Motor neuron (in vitro differentiated cells): ENCODE measurements at regions of chr6 and their contacts with region 1.

Region 1: GRCh38 chr6:150813319-150813992 is 52.0 kb upstream of the MTHFD1L start:
- ATAC-seq: peak in 7 of 8 experiments; percentile 17 to 35 (median 24)
- H3K4me3 ChIP-seq: no peak overlapping the region
- H3K27ac ChIP-seq: no peak overlapping the region
- H3K4me1 ChIP-seq: no peaks in the 10 kb centered on the region

Region 2: GRCh38 chr6:149925974-149926777 is 887.3 kb before region 1 on chr6:
- in situ Hi-C with region 1: loop called in 1 of 9 experiments (anchors 25 kb)
- ATAC-seq: peak; percentile 69 to 89 (median 85)
- H3K4me3 ChIP-seq: peak overlapping the region in 4 of 5 donors; percentile 8 to 24 (median 21)
- H3K27ac ChIP-seq: no peak overlapping the region
- H3K4me1 ChIP-seq: peaks cover 3 to 5% of the 10 kb centered on the region in 2 donors

Region 3: DNA sequence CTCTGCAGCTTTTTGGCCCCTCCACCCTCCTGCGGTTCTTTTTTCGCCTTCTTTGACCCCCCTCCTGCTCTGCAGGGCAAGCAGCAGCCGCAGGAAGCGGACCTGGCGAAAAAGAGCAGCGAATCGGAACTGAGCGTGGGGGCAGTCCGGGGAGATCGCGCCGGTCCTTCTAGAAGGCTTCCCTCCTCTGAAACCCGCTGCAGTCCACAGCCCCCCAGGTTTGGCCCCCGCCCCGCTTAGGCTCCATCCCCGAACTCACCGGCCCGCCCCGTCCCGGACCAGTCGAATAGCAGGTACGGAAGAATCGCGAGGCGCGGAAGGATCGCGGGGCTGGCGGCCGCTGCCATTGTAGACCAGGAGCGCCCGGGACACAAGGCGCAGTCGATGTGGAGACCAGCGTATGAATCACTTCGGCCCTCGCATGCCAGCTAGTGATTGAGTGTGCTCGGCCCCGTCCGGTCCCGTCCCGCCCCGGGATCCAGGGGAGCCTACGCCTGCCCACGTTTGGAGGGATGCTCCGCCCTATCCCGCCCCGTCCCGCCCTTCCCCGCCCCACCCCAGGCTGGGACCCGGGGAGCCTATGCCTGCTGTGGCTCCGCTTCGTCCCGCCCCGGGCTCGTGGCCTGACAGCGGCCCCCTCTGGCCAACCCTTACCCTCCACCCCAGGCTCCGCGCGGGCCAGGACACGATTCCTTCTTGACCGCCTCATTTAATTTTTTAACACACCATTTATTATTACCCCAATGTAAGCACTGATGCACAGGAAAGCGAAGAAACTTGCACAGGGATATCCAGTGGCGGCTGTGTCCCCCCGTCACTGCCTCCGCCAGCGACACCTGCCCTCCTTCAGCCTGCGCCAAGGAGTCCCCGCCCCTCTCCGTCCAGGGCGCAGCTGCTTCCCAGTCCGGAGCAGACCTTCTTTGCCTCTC is 744.5 kb before region 1 on chr6 and contains the start of gene ULBP3:
- in situ Hi-C with region 1: loop called in 2 of 9 experiments (anchors 25 kb)
- ATAC-seq: peak; percentile 81 to 93 (median 88)
- H3K4me3 ChIP-seq: peak within 1 kb of the TSS; percentile 43 to 52 (median 50)
- H3K27ac ChIP-seq: peak within 1 kb of the TSS; percentile 48 to 77
- H3K4me1 ChIP-seq: peaks cover 10 to 14% of the 10 kb centered on the region in 2 donors
- total RNA-seq, gene ULBP3: 5.0 to 43.3 (median 13.1) TPM

Region 4: DNA sequence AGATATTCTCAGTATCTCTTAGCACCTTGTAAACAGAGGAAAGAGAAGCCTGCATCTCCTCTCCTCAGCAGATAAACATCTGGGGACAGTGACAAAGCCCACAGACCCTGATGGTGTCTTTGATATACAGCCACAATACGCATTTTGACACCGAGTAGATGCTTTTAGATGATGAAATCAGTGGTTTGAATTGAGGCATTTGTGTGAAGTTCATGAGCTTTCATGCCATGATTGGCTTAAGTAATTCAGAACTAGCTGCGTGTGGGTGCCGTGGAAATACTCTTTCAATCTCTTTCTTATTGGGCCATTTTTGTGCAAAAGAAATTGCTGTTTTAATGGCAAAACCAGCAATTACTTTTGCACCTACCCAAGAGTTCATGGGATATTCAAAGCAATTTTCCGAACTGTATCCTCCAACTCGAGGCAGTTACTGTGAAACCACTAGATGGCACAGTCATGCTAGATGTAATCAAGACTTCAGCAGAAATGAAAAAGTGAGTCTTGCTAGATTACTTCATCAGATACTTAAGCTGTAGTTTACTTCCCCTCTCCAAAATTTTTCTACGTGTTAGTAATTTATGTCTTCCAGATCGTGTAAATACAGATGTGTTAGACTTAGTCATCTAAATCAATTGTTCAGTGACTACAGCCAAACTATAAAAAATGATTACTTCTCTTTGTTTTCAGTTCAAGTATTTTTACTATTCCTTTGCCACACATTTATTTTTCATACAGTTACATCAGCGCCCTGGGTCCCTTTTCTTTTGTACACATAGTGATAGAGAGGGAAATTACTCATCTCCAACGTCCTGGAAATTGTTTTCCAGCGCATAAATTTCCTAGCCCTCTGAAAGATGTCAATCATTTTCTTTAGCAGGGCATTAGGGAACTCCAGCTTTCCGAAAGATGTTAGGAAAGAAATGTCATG is 395.3 kb before region 1 on chr6:
- in situ Hi-C with region 1: loop called (anchors 5 to 25 kb)
- ATAC-seq: peak; percentile 7 to 81 (median 72)
- H3K4me3 ChIP-seq: no peak overlapping the region
- H3K27ac ChIP-seq: peak overlapping the region in 1 of 2 donors; percentile 36
- H3K4me1 ChIP-seq: peaks cover 17 to 18% of the 10 kb centered on the region in 2 donors

Region 5: GRCh38 chr6:150600301-150601017 is 213.0 kb before region 1 on chr6:
- in situ Hi-C with region 1: loop called in 1 of 9 experiments (anchors 25 kb)
- ATAC-seq: peak; percentile 54 to 84 (median 80)
- H3K4me3 ChIP-seq: peak overlapping the region; percentile 59 to 98 (median 96)
- H3K27ac ChIP-seq: peak overlapping the region; percentile 90 to 94
- H3K4me1 ChIP-seq: peaks cover 19 to 22% of the 10 kb centered on the region in 2 donors

Region 6: DNA sequence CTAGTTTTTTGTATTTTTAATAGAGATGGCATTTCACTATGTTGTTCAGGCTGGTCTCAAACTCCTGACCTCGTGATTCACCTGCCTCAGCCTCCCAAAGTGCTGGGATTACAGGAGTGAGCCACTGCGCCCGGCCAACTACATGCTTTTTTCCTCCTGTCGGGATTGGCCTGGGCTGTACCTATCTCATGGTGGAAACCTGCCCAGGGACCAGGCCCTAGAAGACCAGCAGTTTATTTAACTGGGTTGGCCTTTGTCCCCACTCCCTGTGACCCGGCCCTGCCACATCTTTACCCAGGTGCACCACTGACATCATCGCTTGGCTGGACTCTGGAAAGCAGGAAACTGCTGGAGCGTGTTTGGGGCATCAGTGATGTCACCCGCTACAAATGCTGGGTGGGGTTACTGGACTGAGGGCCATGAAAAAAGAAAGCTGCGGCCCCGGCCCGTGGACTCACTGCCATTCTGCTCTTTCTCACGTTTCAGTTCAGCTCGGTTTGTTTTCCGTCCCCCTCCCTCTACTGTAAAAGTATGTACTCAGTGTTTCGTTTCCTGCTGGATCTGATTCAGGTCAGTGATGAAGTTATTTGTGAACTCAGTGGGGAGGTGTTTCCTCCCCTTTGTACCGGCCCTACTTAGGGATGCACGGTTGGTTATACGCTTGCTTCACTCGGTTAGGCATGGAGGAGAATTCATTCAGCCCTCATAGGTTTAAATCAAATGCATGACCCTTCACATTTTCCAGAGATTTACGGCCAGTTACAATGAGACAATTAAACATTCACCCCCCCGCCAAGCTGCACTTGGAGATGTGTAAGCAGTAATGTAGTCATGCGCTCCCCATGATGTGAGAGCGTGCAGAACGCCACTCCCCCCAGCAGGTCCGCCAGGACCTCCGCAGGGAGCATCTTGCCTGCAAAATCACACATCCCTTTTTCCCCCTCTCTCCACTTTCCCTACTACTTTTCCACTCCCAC is 231.3 kb after region 1 on chr6:
- in situ Hi-C with region 1: no loop called
- ATAC-seq: peak in 5 of 8 experiments; percentile 59 to 73 (median 61)
- H3K4me3 ChIP-seq: peak overlapping the region in 2 of 5 donors; percentile 17 to 23
- H3K27ac ChIP-seq: peak overlapping the region; percentile 82 to 90
- H3K4me1 ChIP-seq: peaks cover 26 to 46% of the 10 kb centered on the region in 2 donors

Region 7: DNA sequence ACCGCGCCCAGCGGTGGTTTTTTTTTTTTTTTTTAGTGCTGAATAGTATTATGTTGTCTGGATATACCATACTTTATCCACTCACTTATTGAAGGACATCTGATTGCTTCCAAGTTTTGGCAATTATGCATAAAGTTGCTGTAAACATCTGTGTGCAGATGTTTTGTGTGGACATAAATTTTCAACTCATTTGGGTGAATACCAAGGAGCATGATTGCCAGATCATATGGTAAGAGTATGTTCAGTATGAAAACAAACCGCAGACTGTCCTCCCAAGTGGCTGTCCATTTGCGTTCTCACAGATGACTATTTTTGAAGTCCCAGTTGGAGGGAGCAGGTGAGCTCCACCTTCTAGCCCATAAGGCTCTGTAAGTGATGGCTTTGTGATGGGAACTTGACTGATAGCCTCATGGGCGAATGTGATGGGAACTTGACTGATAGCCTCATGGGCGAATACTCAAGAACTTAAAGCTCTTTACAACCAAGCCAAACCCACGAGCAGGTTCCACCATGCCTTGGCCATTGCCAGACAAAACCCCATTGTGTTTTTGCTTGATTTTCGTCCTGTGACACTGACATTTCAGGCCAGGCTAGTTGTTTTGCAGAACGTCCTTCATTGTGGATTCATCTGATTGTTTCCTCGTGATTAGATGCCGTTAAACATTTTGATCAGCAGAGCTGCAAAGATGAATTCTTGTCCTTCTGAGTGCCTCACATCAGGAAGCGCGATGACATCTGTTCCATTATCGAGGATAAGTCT is 526.9 kb after region 1 on chr6:
- in situ Hi-C with region 1: no loop called
- ATAC-seq: peak in 1 of 8 experiments; percentile 22
- H3K4me3 ChIP-seq: no peak overlapping the region
- H3K27ac ChIP-seq: no peak overlapping the region
- H3K4me1 ChIP-seq: peaks cover 9 to 14% of the 10 kb centered on the region in 2 donors